Activated CD4-positive, alpha-beta T cell treated with anti-CD3 and anti-CD28 coated beads, Interleukin-2, amount 10 ng/mL, durations not matched to agents 24 days and 14 days (primary cell): ENCODE measurements at regions of chr3 and their contacts with region 1.

Region 1: DNA sequence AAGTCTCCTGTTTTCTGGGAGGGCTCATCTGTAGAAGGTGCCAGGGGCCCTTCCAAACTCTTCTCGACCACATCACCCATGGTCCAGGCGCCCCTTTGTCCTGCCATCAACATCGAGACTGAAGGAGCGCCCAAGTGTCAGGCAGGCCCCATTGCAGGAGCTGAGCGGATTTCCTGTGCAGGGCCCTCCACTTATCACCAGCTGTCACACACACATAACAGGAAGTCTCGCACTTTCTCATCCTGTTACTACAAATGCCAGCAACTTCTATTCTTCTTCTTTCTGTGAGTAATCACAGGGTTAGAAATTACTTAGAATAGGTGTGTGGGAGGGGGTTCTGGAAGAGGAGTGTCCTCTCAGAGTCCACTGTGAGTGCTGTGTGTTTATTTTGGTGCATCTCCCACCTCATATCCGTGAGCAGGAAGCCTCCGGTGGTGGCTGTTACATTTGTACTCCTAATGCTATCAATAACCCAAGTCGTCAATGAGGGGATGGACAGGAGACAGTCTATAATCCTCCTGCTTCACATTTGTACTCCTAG is at the start of gene KLHL6:
- DNase-seq: peak; percentile 91
- H3K4me3 Mint-ChIP-seq: peak within 1 kb of the TSS; percentile 95
- H3K27ac Mint-ChIP-seq: peak within 1 kb of the TSS; percentile 99
- H3K4me1 Mint-ChIP-seq: peaks cover 55% of the 10 kb centered on the region
- H3K27me3 Mint-ChIP-seq: no peaks in the 10 kb centered on the region
- total RNA-seq, gene KLHL6: 44.9 and 47.1 TPM in 2 replicates

Region 2: DNA sequence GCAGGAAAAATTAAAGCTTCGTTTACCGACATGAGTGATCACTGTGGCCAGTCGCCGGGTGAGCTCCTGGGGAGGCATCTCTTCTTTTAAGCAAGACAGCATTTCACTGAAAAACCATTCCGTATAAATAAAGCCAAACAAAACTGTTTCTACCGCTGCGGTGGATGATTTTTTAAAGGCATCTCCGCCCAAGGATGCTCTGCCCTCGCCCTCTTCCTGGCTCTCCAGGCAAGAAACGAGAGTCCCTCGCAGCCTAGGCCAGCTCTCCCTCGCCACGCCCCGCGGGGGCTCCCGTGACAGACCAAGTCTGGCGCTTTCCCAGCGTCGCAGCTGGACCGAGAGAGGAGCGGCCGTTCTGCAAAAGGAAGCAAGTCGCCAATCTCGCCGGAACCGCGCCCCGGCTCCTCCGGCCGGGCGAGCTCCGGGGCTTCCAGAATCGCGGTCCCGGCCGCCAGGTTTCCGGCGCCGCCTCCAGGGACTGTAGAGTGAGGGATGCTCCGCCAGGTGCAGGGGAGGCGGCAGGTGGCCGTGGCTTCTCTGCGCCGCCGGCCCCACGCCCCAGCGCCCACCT is 127.7 kb before region 1 on chr3:
- intact Hi-C with region 1: loop called (anchors 1 kb)
- DNase-seq: peak; percentile 82
- H3K4me3 Mint-ChIP-seq: peak overlapping the region; percentile 82
- H3K27ac Mint-ChIP-seq: peak overlapping the region; percentile 57
- H3K4me1 Mint-ChIP-seq: peaks cover 35% of the 10 kb centered on the region
- H3K27me3 Mint-ChIP-seq: peaks cover 2% of the 10 kb centered on the region

Region 3: GRCh38 chr3:183515968-183516851 is 39.4 kb before region 1 on chr3:
- intact Hi-C with region 1: loop called (anchors 1 kb)
- DNase-seq: peak; percentile 88
- H3K4me3 Mint-ChIP-seq: peak overlapping the region; percentile 39
- H3K27ac Mint-ChIP-seq: peak overlapping the region; percentile 90
- H3K4me1 Mint-ChIP-seq: peaks cover 67% of the 10 kb centered on the region
- H3K27me3 Mint-ChIP-seq: no peaks in the 10 kb centered on the region

Region 4: DNA sequence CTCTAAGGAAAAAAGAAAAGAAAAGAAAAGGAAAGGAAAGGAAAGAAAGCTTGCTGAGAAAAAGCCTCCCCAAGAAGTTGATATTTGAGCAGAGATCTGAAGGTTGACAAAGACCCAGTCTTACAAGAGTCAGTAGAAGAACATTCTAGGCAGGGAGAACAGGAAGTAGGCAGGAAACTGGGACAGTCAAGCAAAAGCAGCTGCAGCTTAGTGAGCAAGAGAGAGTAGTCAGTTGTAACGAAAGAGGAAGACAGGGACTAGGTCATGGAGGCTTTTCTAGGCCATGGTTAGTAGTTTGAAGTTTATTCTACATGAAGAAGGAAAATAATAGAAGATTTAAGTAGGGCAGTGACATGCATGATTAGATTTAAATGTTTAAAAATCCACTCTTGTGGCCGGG is 31.7 kb after region 1 on chr3:
- intact Hi-C with region 1: loop called (anchors 2 kb)
- DNase-seq: peak; percentile 61
- H3K4me3 Mint-ChIP-seq: peak overlapping the region; percentile 19
- H3K27ac Mint-ChIP-seq: peak overlapping the region; percentile 84
- H3K4me1 Mint-ChIP-seq: peaks cover 35% of the 10 kb centered on the region
- H3K27me3 Mint-ChIP-seq: no peaks in the 10 kb centered on the region

Region 5: DNA sequence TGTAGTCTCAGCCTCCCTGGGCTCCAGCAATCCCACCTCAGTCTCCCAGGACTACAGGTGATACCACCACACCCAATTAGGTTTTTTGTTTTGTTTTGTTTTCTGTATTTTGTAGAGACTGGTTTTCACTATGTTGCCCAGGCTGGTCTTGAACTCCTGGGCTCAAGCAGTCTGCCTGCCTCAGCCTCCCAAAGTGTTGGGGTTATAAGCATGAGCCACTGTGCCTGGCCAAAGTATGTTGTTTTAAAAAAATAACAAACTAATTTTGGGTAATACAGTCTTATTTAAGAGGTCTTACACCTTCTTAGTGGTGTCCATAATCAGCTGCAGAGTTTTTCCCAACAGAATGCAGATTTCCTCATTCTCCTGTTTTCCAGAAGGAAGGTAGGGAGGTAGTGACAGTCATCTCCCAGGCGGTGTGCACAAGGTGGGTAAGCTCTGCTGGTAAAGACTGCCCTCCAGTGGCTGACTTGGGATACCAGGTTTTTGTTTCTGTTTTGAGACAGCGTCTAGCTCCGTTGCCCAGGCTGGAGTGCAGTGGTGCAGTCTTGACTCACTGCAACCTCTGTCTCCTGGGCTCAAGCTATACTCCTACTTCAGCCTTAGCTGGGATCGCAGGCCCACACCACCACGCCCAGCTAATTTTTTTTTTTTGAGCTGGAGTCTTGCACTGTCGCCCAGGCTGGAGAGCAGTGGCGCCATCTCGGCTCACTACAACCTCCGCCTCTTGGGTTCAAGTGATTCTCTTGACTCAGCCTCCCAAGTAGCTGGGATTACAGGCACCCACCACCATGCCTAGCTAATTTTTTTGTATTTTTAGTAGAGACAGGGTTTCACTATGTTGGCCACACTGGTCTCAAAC is 211.4 kb after region 1 on chr3:
- intact Hi-C with region 1: loop called (anchors 10 kb)
- DNase-seq: peak; percentile 93
- H3K4me3 Mint-ChIP-seq: no peak overlapping the region
- H3K27ac Mint-ChIP-seq: peak overlapping the region; percentile 37
- H3K4me1 Mint-ChIP-seq: peaks cover 8% of the 10 kb centered on the region
- H3K27me3 Mint-ChIP-seq: no peaks in the 10 kb centered on the region